HepG2 (cell line): ENCODE measurements at regions of chr6 and their contacts with region 1.

Region 1: GRCh38 chr6:139369568-139370282 is 4.7 kb downstream of the CITED2 start:
- DNase-seq: peak; percentile 95
- ATAC-seq: peak; percentile 3
- H3K4me3 ChIP-seq: peak overlapping the region; percentile 6 to 31 (median 13); a peak in 3 of 6 replicates
- H3K27ac ChIP-seq: peak overlapping the region; percentile 59
- H3K4me1 ChIP-seq: peaks cover 46% of the 10 kb centered on the region
- H3K27me3 ChIP-seq: peaks cover 0 to 10% of the 10 kb centered on the region in 2 experiments; a peak in 1 of 5 replicates
- CTCF ChIP-seq: peak; percentile 72
- EP300 ChIP-seq: peak in 1 of 2 experiments; percentile 71; a peak in 1 of 4 replicates
- POLR2A ChIP-seq: peak in 1 of 2 experiments; percentile 48; a peak in 1 of 4 replicates
- RAD21 ChIP-seq: peak; percentile 78

Region 2: GRCh38 chr6:139925894-139926641 is 556.3 kb after region 1 on chr6:
- CTCF ChIA-PET with region 1: no interaction called
- POLR2A ChIA-PET with region 1: interaction called, 6 read pairs
- in situ Hi-C with region 1: no loop called
- intact Hi-C with region 1: loop called (anchors 1 kb)
- DNase-seq: peak; percentile 71
- ATAC-seq: peak; percentile 97
- H3K4me3 ChIP-seq: peak overlapping the region in 1 of 3 experiments; percentile 17; a peak in 1 of 6 replicates
- H3K27ac ChIP-seq: no peak overlapping the region
- H3K4me1 ChIP-seq: peaks cover 16% of the 10 kb centered on the region
- H3K27me3 ChIP-seq: no peaks in the 10 kb centered on the region
- CTCF ChIP-seq: no peak
- EP300 ChIP-seq: no peak; a peak in 1 of 4 replicates
- POLR2A ChIP-seq: no peak
- RAD21 ChIP-seq: no peak

Region 3: DNA sequence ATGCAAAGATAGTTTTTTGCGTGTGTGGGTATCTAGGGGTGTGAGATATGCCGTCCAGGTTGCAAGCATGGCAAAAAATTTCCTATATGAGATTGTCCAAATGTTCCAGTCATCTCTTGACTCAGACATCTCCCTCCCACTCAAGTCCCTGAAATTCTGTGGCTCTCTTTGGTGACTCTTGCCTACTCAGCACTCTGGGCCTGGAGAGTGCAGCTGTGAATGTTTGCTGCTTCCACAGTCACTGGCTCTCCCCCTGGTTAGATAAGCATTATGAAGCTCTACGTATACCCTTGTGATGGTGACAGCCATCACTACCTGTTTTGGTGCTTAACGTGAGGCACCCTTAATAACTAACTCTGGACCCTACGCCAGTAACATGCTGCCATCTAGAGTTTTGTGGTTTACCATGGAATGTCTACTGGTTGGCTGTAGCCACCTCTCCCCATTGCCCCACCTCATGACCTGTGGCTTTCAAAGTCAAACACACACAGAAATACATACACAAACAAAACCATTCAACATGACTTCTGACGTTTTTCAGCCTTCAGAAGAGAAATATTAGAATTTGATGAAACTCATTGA is 626.6 kb after region 1 on chr6:
- CTCF ChIA-PET with region 1: interaction called, 3 read pairs
- POLR2A ChIA-PET with region 1: no interaction called
- in situ Hi-C with region 1: no loop called
- intact Hi-C with region 1: loop called (anchors 1 kb)
- DNase-seq: peak; percentile 48
- ATAC-seq: peak; percentile 95
- H3K4me3 ChIP-seq: no peak overlapping the region
- H3K27ac ChIP-seq: no peak overlapping the region
- H3K4me1 ChIP-seq: no peaks in the 10 kb centered on the region
- H3K27me3 ChIP-seq: no peaks in the 10 kb centered on the region
- CTCF ChIP-seq: peak; percentile 74
- EP300 ChIP-seq: no peak
- POLR2A ChIP-seq: no peak
- RAD21 ChIP-seq: peak; percentile 53; the same call in 1 of the 2 replicates